OCI-LY7 (cell line): ENCODE measurements at regions of chr2 and their contacts with region 1.

Region 1: GRCh38 chr2:196068271-196069209 is at the start of gene DNAH7:
- DNase-seq: peak; percentile 81
- H3K4me3 ChIP-seq: peak within 1 kb of the TSS; percentile 67
- H3K27ac ChIP-seq: no peak within 1 kb of the TSS
- H3K4me1 ChIP-seq: peaks cover 5% of the 10 kb centered on the region
- CTCF ChIP-seq: peak; percentile 96
- total RNA-seq, gene DNAH7: not detected in 2 replicates

Region 2: GRCh38 chr2:195318440-195319111 is 750.0 kb before region 1 on chr2:
- CTCF ChIA-PET with region 1: no interaction called
- POLR2A ChIA-PET with region 1: no interaction called
- intact Hi-C with region 1: loop called (anchors 2 kb)
- DNase-seq: peak; percentile 65
- H3K4me3 ChIP-seq: no peak overlapping the region
- H3K27ac ChIP-seq: no peak overlapping the region
- H3K4me1 ChIP-seq: no peaks in the 10 kb centered on the region
- CTCF ChIP-seq: peak; percentile 96

Region 3: GRCh38 chr2:195404651-195405050 is 663.9 kb before region 1 on chr2:
- CTCF ChIA-PET with region 1: no interaction called
- POLR2A ChIA-PET with region 1: no interaction called
- intact Hi-C with region 1: loop called (anchors 5 kb)
- DNase-seq: peak; percentile 25
- H3K4me3 ChIP-seq: no peak overlapping the region
- H3K27ac ChIP-seq: no peak overlapping the region
- H3K4me1 ChIP-seq: no peaks in the 10 kb centered on the region
- CTCF ChIP-seq: peak; percentile 73

Region 4: DNA sequence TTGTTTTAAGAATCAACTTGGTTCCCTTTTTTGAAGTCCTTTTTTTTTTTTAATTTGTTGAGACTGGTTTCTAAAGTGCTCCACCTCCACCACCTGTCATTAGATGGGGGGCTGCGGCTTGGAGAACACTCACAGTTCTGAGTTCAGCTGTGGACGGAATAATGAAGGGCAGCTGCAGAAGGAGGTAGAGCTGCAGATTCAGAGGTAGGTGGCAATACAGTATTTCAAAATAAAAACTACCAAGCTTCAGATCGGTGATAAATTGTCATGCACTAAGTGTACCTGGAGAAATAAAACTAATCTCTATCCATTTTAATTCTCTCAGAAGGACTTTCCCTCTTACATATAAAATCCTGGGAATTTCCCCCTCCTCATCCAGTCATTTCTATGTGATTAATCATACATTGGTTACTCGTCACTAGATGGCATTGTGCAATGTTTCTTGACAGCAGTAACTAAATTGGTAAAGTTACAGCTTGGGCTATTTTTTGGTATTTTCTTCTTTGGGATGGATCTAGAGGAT is 492.6 kb before region 1 on chr2:
- CTCF ChIA-PET with region 1: no interaction called
- POLR2A ChIA-PET with region 1: no interaction called
- intact Hi-C with region 1: loop called (anchors 5 kb)
- DNase-seq: peak; percentile 80
- H3K4me3 ChIP-seq: peak overlapping the region; percentile 17
- H3K27ac ChIP-seq: peak overlapping the region; percentile 37
- H3K4me1 ChIP-seq: peaks cover 39% of the 10 kb centered on the region
- CTCF ChIP-seq: peak; percentile 90

Region 5: GRCh38 chr2:195612611-195613495 is 455.7 kb before region 1 on chr2:
- CTCF ChIA-PET with region 1: no interaction called
- POLR2A ChIA-PET with region 1: no interaction called
- intact Hi-C with region 1: no loop called
- DNase-seq: no peak
- H3K4me3 ChIP-seq: no peak overlapping the region
- H3K27ac ChIP-seq: no peak overlapping the region
- H3K4me1 ChIP-seq: peaks cover 10% of the 10 kb centered on the region
- CTCF ChIP-seq: no peak

Region 6: GRCh38 chr2:195961873-195962272 is 106.7 kb before region 1 on chr2:
- CTCF ChIA-PET with region 1: no interaction called
- POLR2A ChIA-PET with region 1: no interaction called
- intact Hi-C with region 1: no loop called
- DNase-seq: no peak
- H3K4me3 ChIP-seq: no peak overlapping the region
- H3K27ac ChIP-seq: no peak overlapping the region
- H3K4me1 ChIP-seq: no peaks in the 10 kb centered on the region
- CTCF ChIP-seq: no peak

Region 7: GRCh38 chr2:196337208-196337953 is 268.8 kb after region 1 on chr2:
- CTCF ChIA-PET with region 1: no interaction called
- POLR2A ChIA-PET with region 1: no interaction called
- intact Hi-C with region 1: loop called (anchors 2 kb)
- DNase-seq: peak; percentile 49
- H3K4me3 ChIP-seq: no peak overlapping the region
- H3K27ac ChIP-seq: no peak overlapping the region
- H3K4me1 ChIP-seq: no peaks in the 10 kb centered on the region
- CTCF ChIP-seq: peak; percentile 74; the same call in 1 of the 2 replicates

Region 8: GRCh38 chr2:196639180-196640030 is 570.9 kb after region 1 on chr2 and contains the start of gene CCDC150:
- CTCF ChIA-PET with region 1: no interaction called
- POLR2A ChIA-PET with region 1: no interaction called
- intact Hi-C with region 1: loop called (anchors 10 kb)
- DNase-seq: peak; percentile 96
- H3K4me3 ChIP-seq: peak within 1 kb of the TSS; percentile 95
- H3K27ac ChIP-seq: no peak within 1 kb of the TSS
- H3K4me1 ChIP-seq: peaks cover 11% of the 10 kb centered on the region
- CTCF ChIP-seq: 0 out of 2 replicates have a peak, but pooled peaks have one; percentile 19
- total RNA-seq, gene CCDC150: 39.5 and 40.8 TPM in 2 replicates